OCI-LY7 (cell line): ENCODE measurements at regions of chr11 and their contacts with region 1.

Region 1: DNA sequence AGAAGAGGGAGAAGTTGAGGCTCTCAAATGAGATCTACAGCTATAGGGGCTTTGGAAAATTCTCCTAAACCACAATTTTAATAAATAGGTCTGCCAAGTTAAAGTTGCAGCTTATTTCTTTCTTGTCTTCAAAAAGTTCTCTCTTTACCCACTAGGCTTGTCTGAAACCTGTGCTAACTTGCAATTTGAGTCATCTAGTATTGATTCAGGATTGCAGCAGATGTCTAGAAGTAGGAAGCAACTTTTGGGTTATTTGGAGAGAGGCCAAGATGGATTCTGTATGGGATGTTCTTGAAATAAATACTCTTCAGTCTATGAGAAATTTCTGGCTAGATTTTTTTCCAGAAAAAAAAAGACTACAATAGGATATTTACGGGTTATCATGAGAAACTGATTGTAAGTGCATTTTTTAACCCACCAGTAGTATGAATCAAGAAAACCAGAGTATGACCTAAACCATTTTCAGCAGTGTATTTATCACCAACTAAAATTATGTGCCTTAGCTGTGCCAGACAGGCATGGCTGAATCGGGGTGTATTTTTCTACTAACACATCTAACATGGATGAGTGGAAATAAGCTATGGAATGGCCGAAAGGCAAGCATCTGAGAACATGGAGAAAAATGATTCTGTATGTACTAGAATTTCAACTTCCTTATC is 4.9 kb upstream of the RAB38 start:
- DNase-seq: no peak
- H3K4me3 ChIP-seq: no peak overlapping the region
- H3K27ac ChIP-seq: no peak overlapping the region
- H3K4me1 ChIP-seq: no peaks in the 10 kb centered on the region
- CTCF ChIP-seq: no peak

Region 2: GRCh38 chr11:86620891-86621521 is 1559.1 kb before region 1 on chr11:
- CTCF ChIA-PET with region 1: no interaction called
- POLR2A ChIA-PET with region 1: no interaction called
- intact Hi-C with region 1: loop called (anchors 10 kb)
- DNase-seq: no peak
- H3K4me3 ChIP-seq: no peak overlapping the region
- H3K27ac ChIP-seq: no peak overlapping the region
- H3K4me1 ChIP-seq: no peaks in the 10 kb centered on the region
- CTCF ChIP-seq: no peak